ENCODE measurements at regions of chr10 and their contacts with region 1.

Region 1: GRCh38 chr10:72048450-72049124 is 39.8 kb downstream of the SPOCK2 start:
- DNase-seq: peak; percentile 95
- H3K4me3 Mint-ChIP-seq: no peak overlapping the region
- H3K27ac Mint-ChIP-seq: no peak overlapping the region
- H3K4me1 Mint-ChIP-seq: peaks cover 3% of the 10 kb centered on the region
- H3K27me3 Mint-ChIP-seq: peaks cover 32% of the 10 kb centered on the region

Region 2: GRCh38 chr10:71860243-71861029 is 188.2 kb before region 1 on chr10:
- CTCF ChIA-PET with region 1: no interaction called
- DNase-seq: no peak
- H3K4me3 Mint-ChIP-seq: no peak overlapping the region
- H3K27ac Mint-ChIP-seq: no peak overlapping the region
- H3K4me1 Mint-ChIP-seq: no peaks in the 10 kb centered on the region
- H3K27me3 Mint-ChIP-seq: peaks cover 5% of the 10 kb centered on the region

Region 3: DNA sequence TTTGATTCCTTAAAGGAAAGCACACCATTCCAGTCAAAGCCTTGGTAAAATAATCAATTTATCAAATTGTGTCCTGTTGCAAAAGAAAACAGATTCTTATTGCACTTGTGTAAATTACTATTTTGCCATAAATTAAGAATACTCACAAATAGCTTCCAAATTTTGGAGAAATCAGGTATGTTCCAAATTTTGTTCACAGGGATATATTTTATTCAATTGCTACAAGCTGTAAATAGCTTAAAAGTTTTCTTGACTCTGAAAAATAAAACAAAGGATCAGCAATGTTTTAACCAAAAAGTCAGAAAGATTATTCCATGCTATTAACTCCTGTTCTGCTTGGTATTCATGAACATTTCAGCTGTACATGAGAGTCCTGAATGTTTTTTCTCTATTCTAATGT is 131.8 kb before region 1 on chr10:
- CTCF ChIA-PET with region 1: interaction called, 10 read pairs
- DNase-seq: no peak
- H3K4me3 Mint-ChIP-seq: no peak overlapping the region
- H3K27ac Mint-ChIP-seq: no peak overlapping the region
- H3K4me1 Mint-ChIP-seq: no peaks in the 10 kb centered on the region
- H3K27me3 Mint-ChIP-seq: peaks cover 33% of the 10 kb centered on the region

Region 4: DNA sequence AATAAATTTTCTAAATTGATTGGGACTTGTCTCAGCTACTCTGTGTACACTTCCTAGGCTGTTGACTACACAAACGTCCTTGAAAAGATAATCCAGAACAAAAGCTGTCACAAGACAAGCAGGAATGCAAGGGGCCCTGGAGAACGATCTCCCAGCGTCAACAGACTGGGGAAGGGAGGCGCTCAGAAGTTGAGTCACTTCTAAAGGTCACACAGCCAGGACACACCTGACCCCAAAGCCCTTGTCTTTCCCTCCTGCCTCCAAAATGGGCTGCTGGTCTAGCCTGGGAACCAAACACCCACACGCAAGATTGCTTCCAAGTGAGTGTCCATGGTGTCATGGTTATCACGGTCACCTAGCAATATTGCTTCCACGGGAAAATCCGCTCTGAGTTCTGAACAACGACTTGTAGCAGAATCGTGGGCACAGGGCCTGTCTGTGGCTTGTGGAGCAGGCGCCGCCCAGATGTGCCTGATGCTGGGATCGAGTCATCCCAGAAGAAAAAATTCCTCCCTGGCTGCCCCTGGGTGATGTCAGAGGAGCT is 10.1 kb before region 1 on chr10:
- CTCF ChIA-PET with region 1: interaction called, 14 read pairs
- DNase-seq: no peak
- H3K4me3 Mint-ChIP-seq: no peak overlapping the region
- H3K27ac Mint-ChIP-seq: no peak overlapping the region
- H3K4me1 Mint-ChIP-seq: no peaks in the 10 kb centered on the region
- H3K27me3 Mint-ChIP-seq: peaks cover 36% of the 10 kb centered on the region

Region 5: DNA sequence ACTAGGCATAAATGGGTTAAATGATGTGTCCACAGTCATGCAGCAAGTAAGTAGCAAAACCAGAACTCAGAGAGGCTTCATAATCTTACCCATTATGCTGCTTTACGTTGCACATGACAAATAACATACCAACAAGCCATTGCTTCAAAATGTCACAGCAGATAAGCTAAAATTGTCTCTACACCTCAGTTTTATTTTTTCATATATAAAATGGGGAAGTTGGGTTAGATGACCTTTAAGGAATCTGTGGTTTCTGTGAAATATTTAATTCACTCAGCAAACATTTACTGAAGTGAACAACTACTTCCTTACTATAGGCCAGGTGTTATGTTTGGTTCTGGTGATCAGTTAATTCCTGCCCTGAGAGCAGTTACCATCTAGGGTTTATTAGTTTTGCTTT is 169.7 kb after region 1 on chr10:
- CTCF ChIA-PET with region 1: interaction called, 24 read pairs
- DNase-seq: no peak
- H3K4me3 Mint-ChIP-seq: peak overlapping the region; percentile 57
- H3K27ac Mint-ChIP-seq: peak overlapping the region; percentile 81
- H3K4me1 Mint-ChIP-seq: peaks cover 62% of the 10 kb centered on the region
- H3K27me3 Mint-ChIP-seq: no peaks in the 10 kb centered on the region